ENCODE measurements at regions of chr15 and their contacts with region 1.

Region 1: GRCh38 chr15:35194296-35194695 is 109.2 kb upstream of the NANOGP8 start:
- DNase-seq: no peak
- ATAC-seq: no peak
- H3K4me3 ChIP-seq: no peak overlapping the region
- H3K27ac ChIP-seq: no peak overlapping the region
- H3K4me1 ChIP-seq: no peaks in the 10 kb centered on the region
- H3K27me3 ChIP-seq: no peaks in the 10 kb centered on the region

Region 2: DNA sequence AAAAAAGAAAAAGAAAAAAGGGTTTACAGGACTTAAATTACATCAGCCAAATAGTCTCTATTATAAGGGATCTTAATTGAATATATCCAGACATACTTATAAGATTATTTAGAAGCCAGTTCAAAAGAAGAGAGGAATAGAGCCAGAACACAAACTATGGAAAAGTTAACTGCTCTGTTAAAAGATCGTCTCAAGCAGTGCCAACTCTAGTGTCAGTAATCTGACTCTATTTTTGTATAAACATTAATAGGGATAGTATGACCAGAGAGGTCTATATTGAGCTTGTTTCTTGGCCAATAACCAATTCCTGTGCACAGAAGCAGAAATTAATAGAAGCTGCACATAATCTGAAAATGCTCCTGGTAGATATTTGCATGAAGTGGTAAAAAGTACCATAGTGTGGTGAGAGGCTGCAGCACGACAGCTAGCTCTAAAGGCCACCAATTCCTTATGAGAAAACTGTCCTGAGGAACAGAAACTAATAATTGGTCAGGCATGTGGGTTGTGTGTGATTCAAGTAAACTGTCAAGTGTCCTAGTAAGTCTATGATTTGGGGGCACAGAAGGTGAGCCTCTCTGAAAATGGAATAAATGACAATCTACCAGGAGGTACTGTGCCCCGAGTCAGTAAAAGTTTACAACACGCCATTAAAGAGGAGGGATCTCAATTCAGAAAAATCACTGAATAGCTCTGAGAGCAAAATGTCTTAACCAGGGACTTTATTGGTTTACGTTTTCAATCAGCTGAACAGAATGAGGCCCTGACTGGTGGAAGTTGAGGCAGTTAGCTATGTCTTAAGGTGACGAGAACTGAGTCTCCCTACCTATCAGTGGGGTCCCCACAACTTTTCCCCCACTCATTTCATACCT is 57.7 kb before region 1 on chr15:
- intact Hi-C with region 1: loop called in 1 of 4 experiments (anchors 10 kb)
- DNase-seq: no peak
- ATAC-seq: no peak
- H3K4me3 ChIP-seq: no peak overlapping the region
- H3K27ac ChIP-seq: no peak overlapping the region
- H3K4me1 ChIP-seq: no peaks in the 10 kb centered on the region
- H3K27me3 ChIP-seq: no peaks in the 10 kb centered on the region